Activated CD8-positive, alpha-beta T cell treated with anti-CD3 and anti-CD28 coated beads, Interleukin-2, amount 10 ng/mL, durations not matched to agents 7 days and 5 days (primary cell): ENCODE measurements at regions of chr14 and their contacts with region 1.

Region 1: GRCh38 chr14:69242311-69243224 is 17.4 kb upstream of the GALNT16 start:
- DNase-seq: peak; percentile 71
- ATAC-seq: peak; percentile 63
- H3K4me3 Mint-ChIP-seq: no peak overlapping the region
- H3K27ac Mint-ChIP-seq: no peak overlapping the region
- H3K4me1 Mint-ChIP-seq: peaks cover 2% of the 10 kb centered on the region
- H3K27me3 Mint-ChIP-seq: peaks cover 5% of the 10 kb centered on the region

Region 2: DNA sequence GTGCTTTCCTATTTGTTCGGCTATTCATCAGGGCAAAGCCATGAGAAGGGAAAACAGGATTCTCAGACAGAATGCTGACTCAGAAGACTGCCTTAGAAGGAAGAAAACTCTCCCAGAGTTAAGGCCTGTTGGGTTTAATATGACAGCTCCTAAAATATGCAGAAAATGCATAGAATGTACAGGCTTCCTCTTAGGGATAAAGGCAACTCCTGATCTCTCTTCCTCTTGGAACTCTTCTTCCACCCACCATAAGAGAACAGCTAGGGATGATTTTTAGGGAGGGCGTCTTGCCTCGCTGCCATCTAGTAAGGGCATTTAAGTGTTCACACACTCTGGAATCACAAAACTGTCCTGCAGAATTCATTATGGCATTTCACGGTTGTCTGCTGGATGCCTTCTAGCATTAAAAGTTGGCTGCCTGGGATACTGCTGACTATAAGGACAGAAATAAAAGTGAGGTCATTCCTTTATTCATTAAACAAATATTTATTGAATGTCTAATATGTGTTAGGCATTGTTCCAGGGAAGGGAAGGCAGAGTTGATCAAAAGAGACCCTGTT is 163.3 kb before region 1 on chr14:
- CTCF ChIA-PET with region 1: no interaction called
- POLR2A ChIA-PET with region 1: no interaction called
- DNase-seq: no peak
- ATAC-seq: no peak
- H3K4me3 Mint-ChIP-seq: no peak overlapping the region
- H3K27ac Mint-ChIP-seq: no peak overlapping the region
- H3K4me1 Mint-ChIP-seq: no peaks in the 10 kb centered on the region
- H3K27me3 Mint-ChIP-seq: no peaks in the 10 kb centered on the region

Region 3: GRCh38 chr14:69204753-69205152 is 37.8 kb before region 1 on chr14:
- CTCF ChIA-PET with region 1: no interaction called
- POLR2A ChIA-PET with region 1: no interaction called
- DNase-seq: no peak
- ATAC-seq: no peak
- H3K4me3 Mint-ChIP-seq: no peak overlapping the region
- H3K27ac Mint-ChIP-seq: no peak overlapping the region
- H3K4me1 Mint-ChIP-seq: no peaks in the 10 kb centered on the region
- H3K27me3 Mint-ChIP-seq: no peaks in the 10 kb centered on the region

Region 4: GRCh38 chr14:69363055-69363454 is 120.5 kb after region 1 on chr14:
- CTCF ChIA-PET with region 1: interaction called, 11 read pairs
- POLR2A ChIA-PET with region 1: no interaction called
- DNase-seq: no peak
- ATAC-seq: no peak
- H3K4me3 Mint-ChIP-seq: no peak overlapping the region
- H3K27ac Mint-ChIP-seq: no peak overlapping the region
- H3K4me1 Mint-ChIP-seq: no peaks in the 10 kb centered on the region
- H3K27me3 Mint-ChIP-seq: no peaks in the 10 kb centered on the region

Region 5: GRCh38 chr14:69405762-69406161 is 163.2 kb after region 1 on chr14:
- CTCF ChIA-PET with region 1: no interaction called
- POLR2A ChIA-PET with region 1: no interaction called
- DNase-seq: no peak
- ATAC-seq: no peak
- H3K4me3 Mint-ChIP-seq: no peak overlapping the region
- H3K27ac Mint-ChIP-seq: no peak overlapping the region
- H3K4me1 Mint-ChIP-seq: peaks cover 17% of the 10 kb centered on the region
- H3K27me3 Mint-ChIP-seq: no peaks in the 10 kb centered on the region

Region 6: GRCh38 chr14:69574263-69574953 is 331.8 kb after region 1 on chr14 and contains the start of gene CCDC177:
- CTCF ChIA-PET with region 1: interaction called, 13 read pairs
- POLR2A ChIA-PET with region 1: no interaction called
- DNase-seq: peak; percentile 80
- ATAC-seq: peak; percentile 80
- H3K4me3 Mint-ChIP-seq: peak within 1 kb of the TSS; percentile 62
- H3K27ac Mint-ChIP-seq: no peak within 1 kb of the TSS
- H3K4me1 Mint-ChIP-seq: peaks cover 8% of the 10 kb centered on the region
- H3K27me3 Mint-ChIP-seq: peaks cover 61% of the 10 kb centered on the region
- total RNA-seq, gene CCDC177: not detected